ENCODE measurements at regions of chr6 and their contacts with region 1.

Region 1: GRCh38 chr6:53956068-53956711 is 155.1 kb upstream of the MLIP start:
- DNase-seq: peak; percentile 77 to 83
- H3K4me3 ChIP-seq: no peak overlapping the region
- H3K4me3 Mint-ChIP-seq: no peak overlapping the region
- H3K27ac Mint-ChIP-seq: no peak overlapping the region
- H3K4me1 ChIP-seq: peaks cover 23% of the 10 kb centered on the region
- H3K4me1 Mint-ChIP-seq: peaks cover 9% of the 10 kb centered on the region
- H3K27me3 ChIP-seq: no peaks in the 10 kb centered on the region
- H3K27me3 Mint-ChIP-seq: no peaks in the 10 kb centered on the region
- CTCF ChIP-seq: peak; percentile 69 to 87

Region 2: DNA sequence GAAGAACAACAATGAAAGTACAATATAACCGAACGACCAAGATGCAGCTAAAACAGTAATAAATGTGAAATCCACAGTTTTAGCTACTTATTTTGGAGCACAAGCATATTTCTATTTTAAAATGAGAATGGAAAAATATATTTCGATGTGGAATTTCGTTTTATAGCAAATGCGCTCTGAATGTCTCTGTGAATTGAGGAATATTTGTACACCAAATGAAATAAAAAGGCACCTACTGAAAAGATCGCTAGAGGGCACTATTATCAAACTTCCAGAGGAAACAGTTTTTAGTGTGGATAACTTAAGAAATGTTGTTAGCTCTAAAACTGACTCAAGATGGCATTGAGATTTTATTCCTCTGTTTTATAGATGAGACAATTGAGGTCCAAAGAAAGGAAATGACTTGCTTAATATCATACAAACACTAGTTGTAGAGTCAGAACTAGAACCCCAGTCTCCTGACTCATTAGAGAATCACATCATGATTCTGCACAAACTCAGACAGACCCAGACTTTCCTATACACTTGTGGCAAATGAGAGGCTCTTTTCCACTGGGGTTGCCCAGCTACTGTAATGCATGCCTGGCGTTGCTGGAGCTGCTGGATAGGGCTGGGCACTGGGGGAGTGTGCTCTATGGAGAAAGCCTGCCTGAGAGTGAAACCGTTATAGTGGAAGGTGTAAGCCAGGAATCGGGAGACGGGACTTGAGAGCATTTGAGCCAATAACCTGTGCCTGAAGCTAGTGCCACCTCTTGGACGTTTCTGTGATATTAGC is 463.1 kb before region 1 on chr6:
- CTCF ChIA-PET with region 1: interaction called, 4 read pairs
- POLR2A ChIA-PET with region 1: no interaction called
- intact Hi-C with region 1: loop called (anchors 10 kb)
- DNase-seq: peak; percentile 34 to 50
- H3K4me3 ChIP-seq: no peak overlapping the region
- H3K4me3 Mint-ChIP-seq: no peak overlapping the region
- H3K27ac Mint-ChIP-seq: no peak overlapping the region
- H3K4me1 ChIP-seq: no peaks in the 10 kb centered on the region
- H3K4me1 Mint-ChIP-seq: peaks cover under 1% of the 10 kb centered on the region
- H3K27me3 ChIP-seq: no peaks in the 10 kb centered on the region
- H3K27me3 Mint-ChIP-seq: no peaks in the 10 kb centered on the region
- CTCF ChIP-seq: peak; percentile 48 to 65

Region 3: GRCh38 chr6:53718597-53719460 is 237.4 kb before region 1 on chr6:
- CTCF ChIA-PET with region 1: interaction called, 50 read pairs
- POLR2A ChIA-PET with region 1: interaction called, 3 read pairs
- intact Hi-C with region 1: loop called (anchors 1 kb)
- DNase-seq: peak; percentile 59 to 68
- H3K4me3 ChIP-seq: no peak overlapping the region
- H3K4me3 Mint-ChIP-seq: peak overlapping the region; percentile 28
- H3K27ac Mint-ChIP-seq: no peak overlapping the region
- H3K4me1 ChIP-seq: peaks cover 17% of the 10 kb centered on the region
- H3K4me1 Mint-ChIP-seq: peaks cover 22% of the 10 kb centered on the region
- H3K27me3 ChIP-seq: no peaks in the 10 kb centered on the region
- H3K27me3 Mint-ChIP-seq: no peaks in the 10 kb centered on the region
- CTCF ChIP-seq: peak; percentile 67 to 78

Region 4: DNA sequence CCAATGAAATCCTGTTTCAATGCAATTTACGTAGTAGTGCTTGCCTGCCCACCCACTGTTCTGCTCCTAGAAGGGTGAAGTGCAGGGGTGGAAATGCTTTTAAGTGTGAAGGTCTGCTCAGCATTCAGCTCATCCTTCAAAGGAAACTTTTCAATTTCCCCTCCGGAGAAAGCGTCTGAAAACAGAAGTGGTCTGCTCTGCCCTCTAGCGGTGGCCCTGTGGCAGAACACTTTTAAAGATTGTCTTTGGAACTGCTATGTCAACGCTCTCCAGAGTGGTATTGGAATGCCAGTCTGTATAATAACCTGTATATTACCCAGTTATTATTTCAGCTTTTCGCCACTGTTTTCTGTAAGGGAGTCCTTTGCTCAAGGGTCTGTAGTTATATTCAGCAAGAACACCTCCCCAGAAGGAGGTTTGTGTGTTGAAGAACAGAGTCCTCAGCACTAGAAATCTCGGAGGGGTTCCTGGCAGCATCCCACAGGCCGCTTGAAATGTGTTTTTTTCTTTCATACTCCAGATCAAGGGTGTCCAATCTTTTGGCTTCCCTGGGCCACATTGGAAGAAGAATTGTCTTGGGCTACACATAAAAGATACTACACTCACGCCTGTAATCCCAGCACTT is 227.5 kb before region 1 on chr6:
- CTCF ChIA-PET with region 1: interaction called, 11 read pairs
- POLR2A ChIA-PET with region 1: no interaction called
- intact Hi-C with region 1: no loop called
- DNase-seq: peak in 1 of 2 experiments; percentile 52
- H3K4me3 ChIP-seq: no peak overlapping the region
- H3K4me3 Mint-ChIP-seq: no peak overlapping the region
- H3K27ac Mint-ChIP-seq: peak overlapping the region; percentile 49
- H3K4me1 ChIP-seq: peaks cover 58% of the 10 kb centered on the region
- H3K4me1 Mint-ChIP-seq: peaks cover 45% of the 10 kb centered on the region
- H3K27me3 ChIP-seq: no peaks in the 10 kb centered on the region
- H3K27me3 Mint-ChIP-seq: no peaks in the 10 kb centered on the region
- CTCF ChIP-seq: peak; percentile 69 to 75

Region 5: DNA sequence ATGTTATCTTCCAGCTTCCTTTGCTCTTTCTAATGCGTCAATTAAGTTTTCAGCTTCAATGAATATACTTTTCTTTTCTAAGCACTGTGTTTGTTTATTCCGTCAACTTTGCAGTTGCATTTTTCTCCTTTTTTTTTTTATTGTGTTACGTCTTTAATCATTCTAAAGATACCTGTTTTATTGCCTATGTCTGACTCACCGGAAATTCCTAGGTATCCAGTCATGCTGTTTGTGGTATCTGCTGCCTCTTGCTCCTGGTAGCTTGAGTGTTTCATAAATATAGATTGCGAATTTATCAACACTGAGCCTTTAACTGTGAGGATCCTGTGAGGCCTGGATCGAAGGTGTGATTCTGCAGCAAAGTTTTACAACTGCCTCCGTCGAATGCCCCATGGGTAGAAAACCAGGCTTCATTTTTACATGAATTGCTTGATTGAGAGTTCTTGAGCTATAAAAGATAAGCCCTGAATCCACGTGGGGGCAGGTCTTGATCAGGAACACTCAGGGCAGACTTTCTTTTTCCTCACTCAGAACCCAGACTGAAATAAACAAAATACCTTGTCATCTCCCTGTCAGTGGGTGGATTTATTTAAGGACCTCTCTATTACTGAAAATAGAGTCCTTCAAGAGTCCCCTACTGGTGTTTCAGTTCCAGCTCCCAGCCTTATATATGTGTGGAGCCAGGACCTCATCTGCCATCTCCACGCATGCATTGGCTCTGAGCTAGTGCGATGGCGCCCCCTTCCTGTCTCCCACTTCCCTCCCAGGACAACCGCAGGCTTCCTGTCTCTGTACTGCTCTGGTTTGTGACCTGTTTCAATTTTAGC is 221.5 kb before region 1 on chr6:
- CTCF ChIA-PET with region 1: interaction called, 18 read pairs
- POLR2A ChIA-PET with region 1: no interaction called
- intact Hi-C with region 1: loop called (anchors 2 kb)
- DNase-seq: peak; percentile 84 to 86
- H3K4me3 ChIP-seq: no peak overlapping the region
- H3K4me3 Mint-ChIP-seq: peak overlapping the region; percentile 58
- H3K27ac Mint-ChIP-seq: peak overlapping the region; percentile 88
- H3K4me1 ChIP-seq: peaks cover 84% of the 10 kb centered on the region
- H3K4me1 Mint-ChIP-seq: peaks cover 48% of the 10 kb centered on the region
- H3K27me3 ChIP-seq: no peaks in the 10 kb centered on the region
- H3K27me3 Mint-ChIP-seq: no peaks in the 10 kb centered on the region
- CTCF ChIP-seq: peak; percentile 65 to 71

Region 6: GRCh38 chr6:53854843-53855567 is 101.2 kb before region 1 on chr6:
- CTCF ChIA-PET with region 1: no interaction called
- POLR2A ChIA-PET with region 1: no interaction called
- intact Hi-C with region 1: loop called (anchors 5 kb)
- DNase-seq: peak; percentile 35 to 47
- H3K4me3 ChIP-seq: no peak overlapping the region
- H3K4me3 Mint-ChIP-seq: peak overlapping the region; percentile 54
- H3K27ac Mint-ChIP-seq: peak overlapping the region; percentile 86
- H3K4me1 ChIP-seq: peaks cover 40% of the 10 kb centered on the region
- H3K4me1 Mint-ChIP-seq: peaks cover 24% of the 10 kb centered on the region
- H3K27me3 ChIP-seq: no peaks in the 10 kb centered on the region
- H3K27me3 Mint-ChIP-seq: no peaks in the 10 kb centered on the region
- CTCF ChIP-seq: no peak

Region 7: DNA sequence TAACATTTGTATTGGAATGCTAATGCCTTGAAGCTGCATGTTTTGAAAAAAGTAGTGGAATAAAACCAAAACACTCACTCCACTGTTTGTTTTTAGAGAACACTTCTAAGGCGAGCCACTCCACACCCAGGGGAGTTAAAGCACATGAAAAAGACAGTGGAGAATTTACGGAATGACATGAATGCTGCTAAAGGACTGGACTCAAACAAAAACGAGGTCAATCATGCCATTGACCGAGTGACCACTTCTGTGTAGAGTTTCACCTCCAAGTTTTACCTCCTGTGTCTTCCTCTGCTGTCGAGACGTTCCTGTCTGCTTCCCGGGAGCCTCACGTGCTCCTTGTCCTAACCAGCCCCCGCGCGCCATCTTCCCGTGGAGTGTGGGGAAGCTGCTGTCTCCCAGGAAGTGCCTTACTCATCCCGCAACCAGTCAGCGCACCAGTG is 33.6 kb before region 1 on chr6:
- CTCF ChIA-PET with region 1: interaction called, 3 read pairs
- POLR2A ChIA-PET with region 1: no interaction called
- intact Hi-C with region 1: loop called (anchors 5 kb)
- DNase-seq: peak; percentile 59 to 61
- H3K4me3 ChIP-seq: no peak overlapping the region
- H3K4me3 Mint-ChIP-seq: peak overlapping the region; percentile 58
- H3K27ac Mint-ChIP-seq: peak overlapping the region; percentile 91
- H3K4me1 ChIP-seq: peaks cover 35% of the 10 kb centered on the region
- H3K4me1 Mint-ChIP-seq: peaks cover 25% of the 10 kb centered on the region
- H3K27me3 ChIP-seq: no peaks in the 10 kb centered on the region
- H3K27me3 Mint-ChIP-seq: no peaks in the 10 kb centered on the region
- CTCF ChIP-seq: no peak

Region 8: GRCh38 chr6:54053881-54054391 is 97.7 kb after region 1 on chr6:
- CTCF ChIA-PET with region 1: no interaction called
- POLR2A ChIA-PET with region 1: no interaction called
- intact Hi-C with region 1: no loop called
- DNase-seq: peak; percentile 30 to 45
- H3K4me3 ChIP-seq: no peak overlapping the region
- H3K4me3 Mint-ChIP-seq: peak overlapping the region; percentile 11
- H3K27ac Mint-ChIP-seq: no peak overlapping the region
- H3K4me1 ChIP-seq: peaks cover 11% of the 10 kb centered on the region; the same call in 1 of the 2 replicates
- H3K4me1 Mint-ChIP-seq: peaks cover 6% of the 10 kb centered on the region
- H3K27me3 ChIP-seq: no peaks in the 10 kb centered on the region
- H3K27me3 Mint-ChIP-seq: peaks cover 2% of the 10 kb centered on the region
- CTCF ChIP-seq: no peak

Measured in Caco-2 (cell line).